Caco-2 (cell line): ENCODE measurements at regions of chr1 and their contacts with region 1.

Region 1: DNA sequence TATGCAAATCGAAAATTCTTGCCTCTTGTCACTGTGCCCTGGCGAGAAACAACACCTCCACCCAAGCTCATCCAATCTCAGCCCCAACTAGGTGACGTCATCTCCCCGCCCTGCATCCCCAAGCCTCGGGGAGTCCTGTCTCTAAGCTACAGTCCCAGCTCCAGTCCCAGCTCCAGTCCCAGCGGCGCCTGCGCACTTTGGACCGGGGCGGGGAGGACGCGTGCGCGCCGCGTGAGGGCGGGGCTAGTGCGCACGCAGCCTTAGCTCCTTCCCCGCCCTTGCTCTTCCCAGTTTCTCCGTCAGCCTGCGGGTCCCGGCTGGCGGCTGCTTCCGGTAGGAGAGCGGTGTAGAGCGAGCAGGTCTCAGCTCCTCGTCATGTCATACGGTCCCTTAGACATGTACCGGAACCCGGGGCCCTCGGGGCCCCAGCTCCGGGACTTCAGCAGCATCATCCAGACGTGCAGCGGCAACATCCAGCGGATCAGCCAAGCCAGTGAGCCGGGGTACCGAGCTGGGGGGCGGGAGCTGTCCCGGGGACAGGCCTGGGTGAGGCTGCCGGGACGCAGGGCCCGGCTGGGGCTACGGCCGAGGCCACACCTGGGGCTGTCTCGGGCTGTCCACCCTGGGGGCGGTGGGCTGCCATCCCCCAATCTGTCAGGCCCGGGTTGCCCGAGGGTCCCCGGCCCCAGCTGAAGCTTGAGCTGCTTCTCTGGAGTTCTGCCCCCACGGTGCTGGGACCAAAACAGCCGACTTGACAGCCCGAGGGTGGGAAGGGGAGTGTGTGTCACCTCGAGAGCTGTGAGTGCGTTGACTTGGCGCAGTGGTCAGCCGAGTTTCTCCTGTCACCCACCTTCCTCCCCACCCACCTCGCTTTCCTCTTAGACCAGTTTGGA is at the start of gene STX12:
- DNase-seq: peak; percentile 95 to 96
- H3K4me3 ChIP-seq: peak within 1 kb of the TSS; percentile 59
- H3K4me3 Mint-ChIP-seq: peak within 1 kb of the TSS; percentile 85
- H3K27ac Mint-ChIP-seq: peak within 1 kb of the TSS; percentile 79
- H3K4me1 ChIP-seq: no peaks in the 10 kb centered on the region
- H3K4me1 Mint-ChIP-seq: no peaks in the 10 kb centered on the region
- H3K27me3 ChIP-seq: no peaks in the 10 kb centered on the region
- H3K27me3 Mint-ChIP-seq: no peaks in the 10 kb centered on the region
- CTCF ChIP-seq: no peak
- total RNA-seq, gene STX12: 19.6 and 21.5 TPM in 2 replicates

Region 2: GRCh38 chr1:27682351-27682944 is 90.7 kb before region 1 on chr1:
- CTCF ChIA-PET with region 1: no interaction called
- POLR2A ChIA-PET with region 1: no interaction called
- intact Hi-C with region 1: no loop called
- DNase-seq: no peak
- H3K4me3 ChIP-seq: no peak overlapping the region
- H3K4me3 Mint-ChIP-seq: no peak overlapping the region
- H3K27ac Mint-ChIP-seq: no peak overlapping the region
- H3K4me1 ChIP-seq: no peaks in the 10 kb centered on the region
- H3K4me1 Mint-ChIP-seq: peaks cover 14% of the 10 kb centered on the region
- H3K27me3 ChIP-seq: no peaks in the 10 kb centered on the region
- H3K27me3 Mint-ChIP-seq: no peaks in the 10 kb centered on the region
- CTCF ChIP-seq: no peak

Region 3: GRCh38 chr1:27725374-27726173 is 47.6 kb before region 1 on chr1 and contains the start of gene FAM76A:
- CTCF ChIA-PET with region 1: interaction called, 17 read pairs
- POLR2A ChIA-PET with region 1: interaction called, 20 read pairs
- intact Hi-C with region 1: loop called (anchors 1 kb)
- DNase-seq: peak; percentile 96 to 97
- H3K4me3 ChIP-seq: peak within 1 kb of the TSS; percentile 47
- H3K4me3 Mint-ChIP-seq: peak within 1 kb of the TSS; percentile 88
- H3K27ac Mint-ChIP-seq: peak within 1 kb of the TSS; percentile 99
- H3K4me1 ChIP-seq: 0 out of 2 replicates have a peak, but pooled peaks cover 7% of the 10 kb centered on the region
- H3K4me1 Mint-ChIP-seq: no peaks in the 10 kb centered on the region
- H3K27me3 ChIP-seq: no peaks in the 10 kb centered on the region
- H3K27me3 Mint-ChIP-seq: no peaks in the 10 kb centered on the region
- CTCF ChIP-seq: peak in 1 of 2 experiments; percentile 54
- total RNA-seq, gene FAM76A: 9.4 and 9.8 TPM in 2 replicates

Region 4: DNA sequence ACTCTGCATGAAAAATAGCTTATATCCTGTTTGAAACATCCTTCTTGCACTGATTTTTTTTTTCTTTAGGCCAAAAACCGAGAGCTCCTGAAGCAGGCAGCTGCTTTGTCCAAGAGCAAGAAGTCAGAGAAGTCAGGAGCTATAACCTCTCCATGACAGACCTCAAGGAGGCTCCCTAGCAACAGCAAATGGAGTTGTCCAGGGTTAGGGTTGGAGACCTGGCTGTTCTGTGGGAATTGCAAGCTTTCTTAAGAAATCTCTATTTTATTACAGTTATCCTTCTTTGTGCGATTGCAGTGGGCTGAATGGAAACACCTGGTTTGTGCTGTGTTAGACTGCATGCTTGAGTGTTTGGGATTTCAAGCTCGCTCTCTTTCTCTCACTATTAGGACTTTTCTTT is 12.8 kb before region 1 on chr1:
- CTCF ChIA-PET with region 1: interaction called, 20 read pairs
- POLR2A ChIA-PET with region 1: interaction called, 4 read pairs
- intact Hi-C with region 1: no loop called
- DNase-seq: peak; percentile 35 to 36
- H3K4me3 ChIP-seq: no peak overlapping the region
- H3K4me3 Mint-ChIP-seq: no peak overlapping the region
- H3K27ac Mint-ChIP-seq: no peak overlapping the region
- H3K4me1 ChIP-seq: no peaks in the 10 kb centered on the region
- H3K4me1 Mint-ChIP-seq: no peaks in the 10 kb centered on the region
- H3K27me3 ChIP-seq: no peaks in the 10 kb centered on the region
- H3K27me3 Mint-ChIP-seq: no peaks in the 10 kb centered on the region
- CTCF ChIP-seq: peak in 1 of 2 experiments; percentile 28

Region 5: GRCh38 chr1:27785781-27786455 is 12.7 kb after region 1 on chr1:
- CTCF ChIA-PET with region 1: no interaction called
- POLR2A ChIA-PET with region 1: interaction called, 15 read pairs
- intact Hi-C with region 1: no loop called
- DNase-seq: peak; percentile 36 to 52
- H3K4me3 ChIP-seq: no peak overlapping the region
- H3K4me3 Mint-ChIP-seq: peak overlapping the region; percentile 46
- H3K27ac Mint-ChIP-seq: peak overlapping the region; percentile 93
- H3K4me1 ChIP-seq: peaks cover 29% of the 10 kb centered on the region
- H3K4me1 Mint-ChIP-seq: peaks cover 11% of the 10 kb centered on the region
- H3K27me3 ChIP-seq: no peaks in the 10 kb centered on the region
- H3K27me3 Mint-ChIP-seq: no peaks in the 10 kb centered on the region
- CTCF ChIP-seq: no peak

Region 6: DNA sequence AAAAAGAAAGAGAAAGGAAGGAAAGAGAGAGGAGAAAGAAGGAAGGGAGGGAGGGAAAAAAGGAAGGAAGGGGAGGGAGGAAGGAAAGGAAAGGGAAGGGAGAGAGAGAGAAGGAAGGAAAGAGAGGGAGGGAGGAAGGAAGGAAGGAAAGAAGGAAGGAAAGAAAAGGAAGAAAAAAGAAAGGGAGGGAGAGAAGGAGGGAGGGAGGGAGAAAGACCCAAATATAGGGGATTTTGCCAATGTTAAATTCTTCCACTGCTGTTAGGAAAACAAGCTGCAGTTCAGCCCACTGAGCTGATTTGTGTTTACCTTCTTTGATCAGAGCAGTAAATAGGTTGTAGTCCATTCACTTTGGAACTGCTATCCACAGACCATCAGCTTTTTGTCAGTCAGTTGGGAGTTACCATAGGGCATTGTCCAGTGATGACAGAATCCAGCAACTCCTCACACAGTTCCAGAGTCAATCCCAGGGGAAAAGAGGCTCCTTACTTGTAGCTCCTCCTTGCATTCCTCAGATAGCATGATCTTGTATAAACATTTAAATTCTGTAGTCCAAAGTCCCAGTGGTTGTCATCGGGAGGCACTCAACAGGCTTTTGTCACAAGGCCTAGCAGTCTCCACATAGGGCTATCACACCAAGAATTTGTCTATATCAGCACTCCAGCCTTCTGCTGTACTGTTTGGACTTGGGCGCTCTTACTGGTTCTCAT is 43.9 kb after region 1 on chr1:
- CTCF ChIA-PET with region 1: interaction called, 3 read pairs
- POLR2A ChIA-PET with region 1: interaction called, 26 read pairs
- intact Hi-C with region 1: loop called (anchors 1 kb)
- DNase-seq: peak; percentile 80 to 87
- H3K4me3 ChIP-seq: no peak overlapping the region
- H3K4me3 Mint-ChIP-seq: peak overlapping the region; percentile 62
- H3K27ac Mint-ChIP-seq: peak overlapping the region; percentile 94
- H3K4me1 ChIP-seq: peaks cover 23% of the 10 kb centered on the region
- H3K4me1 Mint-ChIP-seq: peaks cover 22% of the 10 kb centered on the region
- H3K27me3 ChIP-seq: no peaks in the 10 kb centered on the region
- H3K27me3 Mint-ChIP-seq: no peaks in the 10 kb centered on the region
- CTCF ChIP-seq: no peak

Region 7: DNA sequence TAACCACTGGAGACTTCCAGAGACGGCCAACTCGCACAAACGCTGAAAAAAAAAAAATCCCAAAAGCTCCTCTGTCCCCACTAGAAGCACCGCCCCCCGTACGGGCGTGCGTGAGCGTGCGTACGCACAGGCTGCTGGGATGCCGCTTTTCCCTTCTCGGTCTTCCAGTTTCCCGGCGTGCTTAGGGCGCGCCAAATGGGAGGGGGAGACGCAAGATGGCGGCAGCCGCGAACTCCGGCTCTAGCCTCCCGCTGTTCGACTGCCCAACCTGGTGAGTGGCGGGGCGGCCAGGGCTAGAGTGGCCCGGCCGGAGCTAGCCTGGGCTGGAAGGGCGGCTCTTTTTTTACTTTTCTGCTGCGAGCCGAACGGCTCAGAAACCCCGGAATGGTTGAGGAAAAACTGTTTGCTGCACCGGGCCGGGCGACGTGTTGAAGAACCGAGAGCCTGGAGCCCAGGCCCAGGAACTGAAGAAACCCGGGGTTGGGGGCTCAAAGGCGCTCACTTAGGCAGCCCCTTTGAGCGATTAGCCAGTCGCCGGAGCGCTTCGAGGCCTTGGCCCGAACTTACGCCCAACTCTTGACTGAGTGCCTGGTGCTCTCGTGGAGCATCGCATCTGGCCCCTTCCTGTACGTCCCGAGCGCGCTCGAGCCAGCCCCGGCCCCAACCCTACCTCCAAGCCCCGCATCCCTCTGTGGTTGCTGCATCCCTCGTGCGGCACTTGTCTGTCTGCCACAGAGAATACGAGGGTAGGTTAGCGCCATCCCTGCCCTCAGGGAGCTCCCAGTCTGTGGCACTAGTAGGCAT is 57.6 kb after region 1 on chr1 and contains the start of gene PPP1R8:
- CTCF ChIA-PET with region 1: no interaction called
- POLR2A ChIA-PET with region 1: interaction called, 16 read pairs
- intact Hi-C with region 1: no loop called
- DNase-seq: peak; percentile 91 to 93
- H3K4me3 ChIP-seq: peak within 1 kb of the TSS; percentile 91
- H3K4me3 Mint-ChIP-seq: peak within 1 kb of the TSS; percentile 83
- H3K27ac Mint-ChIP-seq: peak within 1 kb of the TSS; percentile 93
- H3K4me1 ChIP-seq: peaks cover 6% of the 10 kb centered on the region; the same call in 1 of the 2 replicates
- H3K4me1 Mint-ChIP-seq: peaks cover 10% of the 10 kb centered on the region
- H3K27me3 ChIP-seq: no peaks in the 10 kb centered on the region
- H3K27me3 Mint-ChIP-seq: no peaks in the 10 kb centered on the region
- CTCF ChIP-seq: no peak
- total RNA-seq, gene PPP1R8: 37.2 and 40.6 TPM in 2 replicates